Mammary epithelial cell (primary cell): ENCODE measurements at regions of chr2 and their contacts with region 1.

Region 1: GRCh38 chr2:202911512-202912341 is at the starts of genes CARF and WDR12:
- DNase-seq: peak; percentile 93
- H3K4me3 ChIP-seq: peak within 1 kb of the TSS; percentile 79 to 99 (median 98)
- H3K27ac ChIP-seq: peak within 1 kb of the TSS; percentile 78
- H3K4me1 ChIP-seq: peaks cover 9% of the 10 kb centered on the region
- H3K27me3 ChIP-seq: no peaks in the 10 kb centered on the region
- CTCF ChIP-seq: no peak
- total RNA-seq, gene CARF: 6.5 to 13.0 TPM
- total RNA-seq, gene WDR12: 31.2 to 86.9 TPM

Region 2: DNA sequence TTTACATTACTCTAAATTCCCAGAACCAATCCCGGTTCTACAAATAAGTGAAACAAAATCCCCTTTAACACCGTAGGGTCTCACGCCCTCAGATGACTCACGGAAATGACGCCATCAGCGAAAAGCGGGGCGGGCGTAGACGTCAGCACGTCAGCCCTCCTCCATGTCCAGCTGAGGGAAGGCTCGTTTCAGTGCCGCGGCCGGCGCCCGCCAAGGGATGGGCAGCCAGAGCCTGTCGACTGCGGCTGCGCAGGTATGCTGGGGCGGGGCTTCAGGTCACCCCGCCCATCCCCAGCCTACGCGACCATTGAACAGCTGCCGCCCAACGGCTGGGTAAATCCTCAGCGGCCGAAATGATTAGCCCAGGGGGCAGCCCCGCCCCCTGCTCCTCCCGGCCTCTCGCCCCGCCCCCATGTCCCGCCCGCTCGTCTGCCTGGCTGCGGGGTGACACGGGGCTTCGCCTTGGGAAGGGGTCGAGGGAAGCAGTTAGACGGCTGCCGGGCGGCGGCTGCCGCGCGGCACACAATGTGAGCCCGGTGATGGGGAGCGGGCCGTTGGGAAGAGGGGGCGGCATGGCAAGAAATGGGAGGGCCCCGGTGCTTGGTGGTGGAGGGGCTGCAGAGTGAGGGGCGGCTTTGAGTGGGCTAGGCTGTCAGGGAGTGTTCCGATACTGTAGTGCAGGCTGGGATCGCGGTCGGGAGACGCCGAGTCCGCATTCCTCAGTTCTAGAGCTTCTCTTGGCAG is 102.9 kb after region 1 on chr2 and contains the start of gene NBEAL1:
- CTCF ChIA-PET with region 1: no interaction called
- dilution Hi-C with region 1: no loop called
- in situ Hi-C with region 1: no loop called
- intact Hi-C with region 1: loop called (anchors 1 kb)
- DNase-seq: peak; percentile 99
- H3K4me3 ChIP-seq: peak within 1 kb of the TSS; percentile 87 to 99 (median 98)
- H3K27ac ChIP-seq: peak within 1 kb of the TSS; percentile 98
- H3K4me1 ChIP-seq: peaks cover 10% of the 10 kb centered on the region
- H3K27me3 ChIP-seq: no peaks in the 10 kb centered on the region
- CTCF ChIP-seq: no peak
- total RNA-seq, gene NBEAL1: 36.0 to 92.0 TPM

Region 3: GRCh38 chr2:203097735-203098134 is 186.0 kb after region 1 on chr2:
- CTCF ChIA-PET with region 1: no interaction called
- dilution Hi-C with region 1: no loop called
- in situ Hi-C with region 1: no loop called
- intact Hi-C with region 1: loop called (anchors 5 kb)
- DNase-seq: no peak
- H3K4me3 ChIP-seq: no peak overlapping the region
- H3K27ac ChIP-seq: no peak overlapping the region
- H3K4me1 ChIP-seq: no peaks in the 10 kb centered on the region
- H3K27me3 ChIP-seq: no peaks in the 10 kb centered on the region
- CTCF ChIP-seq: peak; percentile 37 to 43

Region 4: GRCh38 chr2:203238704-203239526 is 327.2 kb after region 1 on chr2 and contains the start of gene CYP20A1:
- CTCF ChIA-PET with region 1: no interaction called
- dilution Hi-C with region 1: no loop called
- in situ Hi-C with region 1: no loop called
- intact Hi-C with region 1: loop called (anchors 5 kb)
- DNase-seq: peak; percentile 97
- H3K4me3 ChIP-seq: peak within 1 kb of the TSS; percentile 68 to 93 (median 81)
- H3K27ac ChIP-seq: peak within 1 kb of the TSS; percentile 88
- H3K4me1 ChIP-seq: peaks cover 3% of the 10 kb centered on the region
- H3K27me3 ChIP-seq: no peaks in the 10 kb centered on the region
- CTCF ChIP-seq: peak in 1 of 2 donors; percentile 46
- total RNA-seq, gene CYP20A1: 17.6 to 25.0 TPM